Left lung (tissue), 14 donors: ENCODE measurements at regions of chr20 and their contacts with region 1.

Region 1: DNA sequence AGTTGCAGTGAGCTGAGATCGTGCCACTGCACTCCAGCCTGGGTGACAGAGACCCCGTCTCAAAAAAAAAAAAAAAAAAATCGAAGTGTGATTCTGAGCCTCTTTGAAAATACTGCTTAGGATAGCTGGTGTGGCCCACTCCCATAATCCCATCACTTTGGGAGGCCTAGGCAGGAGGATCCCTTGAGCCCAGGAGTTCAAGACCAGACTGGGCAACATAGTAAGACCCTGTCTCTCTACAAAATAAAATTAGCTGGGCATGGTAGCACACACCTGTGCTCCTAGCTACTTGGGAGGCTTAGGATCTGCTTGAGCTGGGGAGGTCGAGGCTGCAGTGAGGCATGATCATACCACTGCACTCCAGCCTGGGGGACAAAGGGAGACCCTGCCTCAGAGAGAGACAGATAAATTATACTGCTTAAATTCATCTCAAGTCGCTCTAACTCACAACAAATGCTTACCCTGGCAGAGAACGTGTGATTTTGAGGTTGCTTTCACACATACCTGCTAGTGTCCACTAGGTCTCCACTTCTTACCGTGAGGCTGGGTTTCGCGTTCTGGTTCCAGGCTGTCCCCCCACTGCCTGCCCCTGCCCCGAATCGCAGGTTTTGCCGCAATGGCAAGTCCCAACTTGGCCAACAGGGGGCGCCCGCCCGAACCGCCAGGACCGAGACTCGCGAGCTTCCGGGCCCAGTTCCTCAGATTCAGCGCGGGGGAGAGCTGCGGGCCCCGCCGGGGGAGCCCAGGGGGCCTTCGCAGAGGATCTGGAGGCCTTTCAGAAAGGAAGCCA is 12.3 kb upstream of the TMC2 start:
- DNase-seq: peak; percentile 82 to 98 (median 90)
- ATAC-seq: peak; percentile 92
- H3K4me3 ChIP-seq: peak overlapping the region; percentile 79 to 83
- H3K27ac ChIP-seq: peak overlapping the region; percentile 90 to 95
- H3K4me1 ChIP-seq: peaks cover 0 to 24% of the 10 kb centered on the region in 2 donors
- H3K27me3 ChIP-seq: peaks cover 0 to 20% of the 10 kb centered on the region in 2 donors
- CTCF ChIP-seq: peak; percentile 96 to 97

Region 2: GRCh38 chr20:2626853-2627541 is 102.9 kb after region 1 on chr20:
- intact Hi-C with region 1: no loop called
- DNase-seq: peak in 1 of 4 donors; percentile 3
- ATAC-seq: peak; percentile 23
- H3K4me3 ChIP-seq: no peak overlapping the region
- H3K27ac ChIP-seq: no peak overlapping the region
- H3K4me1 ChIP-seq: no peaks in the 10 kb centered on the region
- H3K27me3 ChIP-seq: no peaks in the 10 kb centered on the region
- CTCF ChIP-seq: no peak

Region 3: GRCh38 chr20:2643708-2644107 is 119.6 kb after region 1 on chr20:
- intact Hi-C with region 1: loop called in 1 of 2 experiments (anchors 10 kb)
- DNase-seq: no peak
- ATAC-seq: no peak
- H3K4me3 ChIP-seq: no peak overlapping the region
- H3K27ac ChIP-seq: no peak overlapping the region
- H3K4me1 ChIP-seq: peaks cover 0 to 6% of the 10 kb centered on the region in 2 donors
- H3K27me3 ChIP-seq: no peaks in the 10 kb centered on the region
- CTCF ChIP-seq: no peak

Region 4: GRCh38 chr20:3045816-3046676 is 521.9 kb after region 1 on chr20 and contains the start of gene MRPS26:
- intact Hi-C with region 1: no loop called
- DNase-seq: peak; percentile 92 to 98 (median 93)
- ATAC-seq: peak; percentile 96
- H3K4me3 ChIP-seq: peak within 1 kb of the TSS; percentile 91 to 98
- H3K27ac ChIP-seq: peak within 1 kb of the TSS; percentile 87 to 90
- H3K4me1 ChIP-seq: peaks cover 7 to 25% of the 10 kb centered on the region in 2 donors
- H3K27me3 ChIP-seq: no peaks in the 10 kb centered on the region
- CTCF ChIP-seq: no peak
- polyA plus RNA-seq, gene MRPS26: 36.0 to 57.0 (median 47.6) TPM